ENCODE measurements at regions of chr6 and their contacts with region 1.

Region 1: DNA sequence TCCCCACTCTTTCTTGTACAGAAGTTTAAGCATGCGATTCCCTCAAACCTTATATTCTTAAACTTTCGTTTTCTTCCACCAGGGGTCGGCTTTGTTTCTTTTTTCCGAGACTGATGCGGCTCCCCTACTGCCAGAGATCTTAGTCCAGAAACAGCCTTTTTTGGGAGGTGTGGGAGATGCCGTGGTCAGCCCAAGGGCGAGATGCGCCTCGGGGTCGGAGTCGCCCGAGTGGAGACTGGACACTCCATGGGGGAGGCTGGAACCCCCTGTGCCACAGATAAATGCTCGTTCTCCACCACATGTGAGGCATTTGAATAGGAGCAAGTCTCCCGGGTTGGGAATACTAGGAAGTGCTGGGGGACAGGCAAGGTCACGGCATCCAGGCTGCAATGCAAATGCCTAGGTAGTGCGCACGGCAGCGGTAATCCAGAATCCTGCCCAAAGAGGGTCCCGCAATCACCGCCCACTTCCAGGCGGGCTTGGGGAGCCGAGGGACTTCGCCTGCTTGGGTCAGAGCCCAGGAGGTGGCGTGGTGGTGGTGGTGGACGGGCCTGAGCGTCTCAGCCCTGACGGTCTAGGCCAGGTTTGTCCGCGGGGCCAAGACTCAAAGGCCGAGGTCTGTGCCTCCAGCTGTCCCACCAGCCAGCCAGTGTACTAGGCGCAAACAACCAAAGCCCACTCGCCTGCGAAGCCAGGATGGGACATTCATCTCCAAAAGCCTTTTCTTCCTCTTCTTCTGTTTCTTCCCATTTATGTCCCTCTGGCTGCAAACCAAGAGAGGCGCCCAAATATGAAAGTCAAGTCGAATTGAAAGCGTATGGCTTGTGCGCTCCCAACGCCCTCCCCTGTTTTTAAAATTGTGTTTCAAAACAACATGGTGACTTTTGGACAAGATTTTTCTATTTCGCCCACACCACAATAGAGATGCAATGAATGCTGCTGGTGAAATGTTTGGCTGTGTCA is 39.3 kb upstream of the OSTM1 start:
- DNase-seq: peak; percentile 60 to 67 (median 62)
- ATAC-seq: peak; percentile 81
- H3K4me3 ChIP-seq: no peak overlapping the region
- H3K27ac ChIP-seq: no peak overlapping the region
- H3K4me1 ChIP-seq: peaks cover 0 to 31% of the 10 kb centered on the region in 2 experiments; a peak in 3 of 5 replicates
- H3K27me3 ChIP-seq: peaks cover 11 to 45% of the 10 kb centered on the region in 2 experiments; a peak in 4 of 5 replicates
- CTCF ChIP-seq: peak; percentile 51 to 77 (median 67); a peak in 5 of 6 replicates
- EP300 ChIP-seq: no peak
- POLR2A ChIP-seq: no peak
- RAD21 ChIP-seq: peak; percentile 84 to 86

Region 2: DNA sequence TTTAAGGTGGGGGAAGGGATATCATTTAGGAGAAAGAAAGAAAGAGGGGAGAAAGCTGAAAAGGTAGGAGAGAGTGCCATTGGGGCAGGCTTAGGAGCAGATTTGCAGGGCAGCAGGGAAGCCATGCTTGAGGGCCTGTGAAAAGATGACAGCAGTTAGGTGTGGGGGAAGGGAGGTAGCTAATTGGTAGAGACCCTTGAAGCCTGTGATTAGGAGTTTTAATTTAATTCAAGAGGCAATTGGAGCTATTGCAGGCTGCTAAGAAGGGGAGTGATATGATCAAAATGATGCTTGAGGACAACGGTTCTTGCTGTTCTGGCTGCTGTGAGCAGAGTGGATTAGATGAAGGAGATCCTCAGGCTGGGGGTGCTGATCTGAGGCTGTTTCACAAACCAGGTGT is 131.4 kb before region 1 on chr6:
- CTCF ChIA-PET with region 1: no interaction called
- POLR2A ChIA-PET with region 1: no interaction called
- in situ Hi-C with region 1: no loop called
- intact Hi-C with region 1: loop called (anchors 5 kb)
- DNase-seq: no peak
- ATAC-seq: no peak; the same call in 2 of the 3 replicates
- H3K4me3 ChIP-seq: no peak overlapping the region
- H3K27ac ChIP-seq: no peak overlapping the region
- H3K4me1 ChIP-seq: peaks cover 3 to 5% of the 10 kb centered on the region in 2 experiments; a peak in 3 of 5 replicates
- H3K27me3 ChIP-seq: no peaks in the 10 kb centered on the region
- CTCF ChIP-seq: no peak
- EP300 ChIP-seq: no peak
- POLR2A ChIP-seq: no peak
- RAD21 ChIP-seq: no peak

Region 3: DNA sequence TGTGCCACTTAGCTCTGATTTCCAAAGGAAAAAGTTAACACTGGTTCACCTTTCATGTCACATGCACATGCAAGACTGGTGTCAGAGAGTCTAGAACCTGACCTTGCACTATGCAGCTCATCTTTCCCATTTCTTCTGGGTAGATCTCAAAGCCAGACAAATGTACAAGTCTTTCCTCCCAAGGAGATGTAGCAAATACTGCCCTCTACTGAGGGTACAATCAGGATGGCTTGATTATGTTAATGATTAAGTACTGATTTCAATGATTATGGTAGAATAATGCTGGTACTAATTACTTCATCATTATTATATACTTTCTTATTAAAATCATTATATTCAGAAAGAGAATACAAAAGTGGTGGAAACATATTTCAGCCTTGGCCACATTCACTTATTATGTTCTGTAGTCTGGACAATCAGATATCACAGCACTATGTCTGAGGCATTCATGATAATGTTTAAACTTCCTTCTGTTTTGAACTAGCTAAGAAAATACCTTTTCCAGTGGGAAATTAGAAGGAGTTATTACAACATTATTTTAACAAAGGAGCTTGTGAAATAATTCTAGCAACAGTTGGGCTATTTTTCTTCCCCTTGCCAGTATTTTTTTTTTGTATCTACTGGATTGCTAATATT is 378.4 kb after region 1 on chr6:
- CTCF ChIA-PET with region 1: interaction called, 7 read pairs
- POLR2A ChIA-PET with region 1: no interaction called
- in situ Hi-C with region 1: no loop called
- intact Hi-C with region 1: loop called (anchors 1 kb)
- DNase-seq: peak in 3 of 4 experiments; percentile 11 to 41 (median 15)
- ATAC-seq: peak; percentile 62; the same call in 2 of the 3 replicates
- H3K4me3 ChIP-seq: no peak overlapping the region
- H3K27ac ChIP-seq: no peak overlapping the region
- H3K4me1 ChIP-seq: no peaks in the 10 kb centered on the region
- H3K27me3 ChIP-seq: no peaks in the 10 kb centered on the region
- CTCF ChIP-seq: peak; percentile 30 to 74 (median 47); a peak in 5 of 6 replicates
- EP300 ChIP-seq: no peak
- POLR2A ChIP-seq: no peak
- RAD21 ChIP-seq: peak; percentile 75 to 87

Region 4: DNA sequence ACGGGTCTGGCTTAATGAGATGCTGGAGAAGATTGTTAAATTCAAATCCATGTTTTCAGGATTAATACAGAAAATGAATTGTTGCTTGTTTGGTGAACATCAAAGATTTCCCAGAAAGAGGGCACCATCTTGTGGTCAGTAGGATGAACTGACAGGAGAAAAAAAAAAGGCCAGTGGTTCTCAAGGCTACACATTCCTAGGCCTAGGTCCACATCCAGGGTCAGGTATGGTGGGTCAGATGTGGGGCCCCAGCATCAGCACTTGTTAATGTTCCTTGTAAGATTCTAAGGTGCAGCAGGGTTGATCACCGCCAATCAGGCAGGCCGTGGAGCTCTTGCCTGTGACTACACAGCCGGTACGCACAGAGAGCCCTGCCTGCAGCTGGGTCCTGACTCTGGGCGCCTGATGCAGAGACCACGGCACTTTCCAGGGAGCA is 412.9 kb after region 1 on chr6:
- CTCF ChIA-PET with region 1: interaction called, 14 read pairs
- POLR2A ChIA-PET with region 1: interaction called, 3 read pairs
- in situ Hi-C with region 1: loop called (anchors 5 kb)
- intact Hi-C with region 1: loop called (anchors 1 kb)
- DNase-seq: peak; percentile 44 to 50 (median 48)
- ATAC-seq: peak; percentile 74
- H3K4me3 ChIP-seq: no peak overlapping the region
- H3K27ac ChIP-seq: no peak overlapping the region
- H3K4me1 ChIP-seq: no peaks in the 10 kb centered on the region
- H3K27me3 ChIP-seq: no peaks in the 10 kb centered on the region
- CTCF ChIP-seq: peak; percentile 59 to 84 (median 80); a peak in 5 of 6 replicates
- EP300 ChIP-seq: no peak
- POLR2A ChIP-seq: no peak
- RAD21 ChIP-seq: peak; percentile 85 to 90

Measured in K562 (cell line).